ENCODE measurements at regions of chr22 and their contacts with region 1.

Region 1: DNA sequence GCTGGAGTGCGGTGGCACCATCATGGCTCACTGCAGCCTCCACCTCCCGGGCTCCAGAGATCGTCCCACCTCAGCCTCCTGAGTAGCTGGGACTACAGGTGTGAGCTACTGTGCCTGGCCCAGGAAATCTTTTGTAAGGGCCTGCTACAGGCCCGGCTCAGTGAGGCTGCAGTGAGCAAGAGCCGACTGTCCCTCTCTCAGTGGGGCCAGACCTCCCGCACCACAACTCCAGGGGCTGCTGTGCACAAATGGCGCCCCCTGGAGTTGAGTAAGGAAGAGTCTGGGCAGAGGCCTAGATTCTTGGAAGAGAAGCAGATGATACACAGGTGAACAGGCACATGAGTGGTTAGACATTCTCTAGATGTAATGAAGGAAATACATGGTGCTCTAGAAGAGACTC is 7.0 kb downstream of the SERHL2 start:
- H3K4me3 ChIP-seq: no peak overlapping the region
- H3K27ac ChIP-seq: no peak overlapping the region
- H3K4me1 ChIP-seq: no peaks in the 10 kb centered on the region
- CTCF ChIP-seq: peak; percentile 53; the same call in 1 of the 2 replicates

Region 2: GRCh38 chr22:42511401-42511891 is 49.3 kb before region 1 on chr22:
- CTCF ChIA-PET with region 1: interaction called, 17 read pairs
- POLR2A ChIA-PET with region 1: no interaction called
- H3K4me3 ChIP-seq: no peak overlapping the region
- H3K27ac ChIP-seq: no peak overlapping the region
- H3K4me1 ChIP-seq: no peaks in the 10 kb centered on the region
- CTCF ChIP-seq: no peak

Region 3: GRCh38 chr22:42533638-42533977 is 27.2 kb before region 1 on chr22:
- CTCF ChIA-PET with region 1: interaction called, 31 read pairs
- POLR2A ChIA-PET with region 1: interaction called, 4 read pairs
- H3K4me3 ChIP-seq: no peak overlapping the region
- H3K27ac ChIP-seq: no peak overlapping the region
- H3K4me1 ChIP-seq: no peaks in the 10 kb centered on the region
- CTCF ChIP-seq: no peak

Region 4: GRCh38 chr22:42544686-42545085 is 16.1 kb before region 1 on chr22:
- CTCF ChIA-PET with region 1: interaction called, 16 read pairs
- POLR2A ChIA-PET with region 1: no interaction called
- H3K4me3 ChIP-seq: no peak overlapping the region
- H3K27ac ChIP-seq: no peak overlapping the region
- H3K4me1 ChIP-seq: no peaks in the 10 kb centered on the region
- CTCF ChIP-seq: no peak